Activated T-helper 2 cell treated with anti-CD3 and anti-CD28 coated beads, Interferon-gamma antibody, Interleukin-2, Interleukin-4, amounts not matched to agents 10 μg/mL and 5 μg/mL and 100 μg/mL, durations not matched to agents 14 hours and 24 hours and 36 hours (primary cell): ENCODE measurements at regions of chr2 and their contacts with region 1.

Region 1: GRCh38 chr2:175167792-175168563 is at the start of gene ATF2:
- DNase-seq: peak; percentile 98
- H3K4me3 Mint-ChIP-seq: peak within 1 kb of the TSS; percentile 99
- H3K27ac Mint-ChIP-seq: peak within 1 kb of the TSS; percentile 99
- H3K4me1 Mint-ChIP-seq: peaks cover 47% of the 10 kb centered on the region
- H3K27me3 Mint-ChIP-seq: no peaks in the 10 kb centered on the region
- total RNA-seq, gene ATF2: 64.0 and 65.9 TPM in 2 replicates

Region 2: DNA sequence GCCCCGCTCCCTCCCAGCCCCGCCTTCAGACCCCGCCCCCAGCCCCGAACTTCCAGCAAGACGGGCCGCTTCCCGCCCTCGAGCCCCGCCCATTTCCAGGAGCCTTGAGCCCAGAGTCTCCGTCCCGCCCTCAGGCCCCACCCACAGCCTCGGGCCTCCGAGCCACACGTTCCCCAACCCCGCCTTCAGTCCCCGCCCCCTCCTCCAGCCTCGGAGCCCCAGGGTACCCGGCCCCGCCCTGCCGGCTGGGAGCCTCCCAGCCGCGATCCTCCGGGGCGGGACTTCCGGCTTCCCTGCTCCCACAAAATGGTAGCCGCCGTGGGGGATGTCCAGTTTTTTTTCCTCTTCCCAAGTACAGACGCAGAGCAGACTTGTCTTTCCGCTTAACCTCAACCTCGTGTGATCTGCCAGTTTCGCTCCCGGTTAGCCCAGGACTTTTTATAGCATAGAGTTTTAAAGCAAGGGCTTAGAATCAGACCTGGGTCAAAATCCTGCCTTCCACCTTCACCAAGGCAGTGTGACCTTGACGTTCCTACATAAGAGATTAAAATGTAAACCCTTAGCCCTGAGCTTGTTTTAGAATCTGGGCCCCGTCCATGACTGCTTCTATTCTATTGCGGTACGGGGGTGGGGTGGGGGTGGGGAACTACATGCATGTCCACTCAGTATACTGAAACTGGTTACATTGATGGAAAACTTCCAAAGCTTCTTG is 680.7 kb before region 1 on chr2:
- intact Hi-C with region 1: loop called (anchors 5 kb)
- DNase-seq: peak; percentile 85
- H3K4me3 Mint-ChIP-seq: peak overlapping the region; percentile 87
- H3K27ac Mint-ChIP-seq: peak overlapping the region; percentile 79
- H3K4me1 Mint-ChIP-seq: peaks cover 52% of the 10 kb centered on the region
- H3K27me3 Mint-ChIP-seq: peaks cover 7% of the 10 kb centered on the region

Region 3: GRCh38 chr2:174997110-174997509 is 170.9 kb before region 1 on chr2:
- intact Hi-C with region 1: no loop called
- DNase-seq: no peak
- H3K4me3 Mint-ChIP-seq: no peak overlapping the region
- H3K27ac Mint-ChIP-seq: no peak overlapping the region
- H3K4me1 Mint-ChIP-seq: peaks cover 2% of the 10 kb centered on the region
- H3K27me3 Mint-ChIP-seq: peaks cover 21% of the 10 kb centered on the region

Region 4: GRCh38 chr2:175131252-175131651 is 36.7 kb before region 1 on chr2:
- intact Hi-C with region 1: loop called (anchors 5 kb)
- DNase-seq: no peak
- H3K4me3 Mint-ChIP-seq: no peak overlapping the region
- H3K27ac Mint-ChIP-seq: no peak overlapping the region
- H3K4me1 Mint-ChIP-seq: peaks cover 9% of the 10 kb centered on the region
- H3K27me3 Mint-ChIP-seq: no peaks in the 10 kb centered on the region

Region 5: DNA sequence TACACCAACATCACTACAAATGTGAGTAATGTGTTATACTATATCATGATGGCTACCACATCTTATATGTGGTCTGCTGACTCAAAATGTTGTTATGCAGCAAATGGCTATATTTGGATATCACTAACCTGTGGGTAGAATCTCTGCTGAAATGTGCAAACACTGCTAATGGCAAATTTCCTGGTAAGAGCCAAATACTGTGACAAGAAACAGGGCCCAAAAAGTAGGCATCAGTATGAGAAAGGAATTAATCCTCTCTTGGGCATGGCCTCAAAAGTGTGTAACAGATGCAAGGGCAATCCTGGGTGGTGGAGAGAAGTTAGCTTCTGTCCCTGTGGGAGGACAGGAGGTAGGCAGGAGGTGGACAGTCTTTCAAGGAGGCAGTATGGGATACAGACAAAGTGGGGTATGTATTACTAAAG is 13.3 kb before region 1 on chr2:
- intact Hi-C with region 1: loop called (anchors 1 kb)
- DNase-seq: no peak
- H3K4me3 Mint-ChIP-seq: peak overlapping the region; percentile 34
- H3K27ac Mint-ChIP-seq: peak overlapping the region; percentile 86
- H3K4me1 Mint-ChIP-seq: peaks cover 36% of the 10 kb centered on the region
- H3K27me3 Mint-ChIP-seq: no peaks in the 10 kb centered on the region

Region 6: GRCh38 chr2:175181104-175181876 is 13.3 kb after region 1 on chr2 and contains the start of gene ATP5MC3:
- intact Hi-C with region 1: loop called (anchors 1 kb)
- DNase-seq: peak; percentile 90
- H3K4me3 Mint-ChIP-seq: peak within 1 kb of the TSS; percentile 86
- H3K27ac Mint-ChIP-seq: peak within 1 kb of the TSS; percentile 98
- H3K4me1 Mint-ChIP-seq: peaks cover 21% of the 10 kb centered on the region
- H3K27me3 Mint-ChIP-seq: no peaks in the 10 kb centered on the region
- total RNA-seq, gene ATP5MC3: 417 and 424 TPM in 2 replicates